MCF 10A (cell line): ENCODE measurements at regions of chr11 and their contacts with region 1.

Region 1: GRCh38 chr11:3854977-3855807 is at the start of gene STIM1:
- DNase-seq: peak; percentile 94
- H3K4me3 Mint-ChIP-seq: peak within 1 kb of the TSS; percentile 99
- H3K27ac Mint-ChIP-seq: peak within 1 kb of the TSS; percentile 87
- H3K4me1 Mint-ChIP-seq: peaks cover 30% of the 10 kb centered on the region
- H3K27me3 Mint-ChIP-seq: no peaks in the 10 kb centered on the region
- CTCF ChIP-seq: peak; percentile 95
- total RNA-seq, gene STIM1: 41.2 and 56.2 TPM in 2 replicates

Region 2: GRCh38 chr11:3834664-3835461 is 20.3 kb before region 1 on chr11:
- CTCF ChIA-PET with region 1: interaction called, 49 read pairs
- POLR2A ChIA-PET with region 1: interaction called, 4 read pairs
- intact Hi-C with region 1: no loop called
- DNase-seq: no peak
- H3K4me3 Mint-ChIP-seq: no peak overlapping the region
- H3K27ac Mint-ChIP-seq: peak overlapping the region; percentile 82
- H3K4me1 Mint-ChIP-seq: peaks cover 45% of the 10 kb centered on the region
- H3K27me3 Mint-ChIP-seq: no peaks in the 10 kb centered on the region
- CTCF ChIP-seq: no peak

Region 3: DNA sequence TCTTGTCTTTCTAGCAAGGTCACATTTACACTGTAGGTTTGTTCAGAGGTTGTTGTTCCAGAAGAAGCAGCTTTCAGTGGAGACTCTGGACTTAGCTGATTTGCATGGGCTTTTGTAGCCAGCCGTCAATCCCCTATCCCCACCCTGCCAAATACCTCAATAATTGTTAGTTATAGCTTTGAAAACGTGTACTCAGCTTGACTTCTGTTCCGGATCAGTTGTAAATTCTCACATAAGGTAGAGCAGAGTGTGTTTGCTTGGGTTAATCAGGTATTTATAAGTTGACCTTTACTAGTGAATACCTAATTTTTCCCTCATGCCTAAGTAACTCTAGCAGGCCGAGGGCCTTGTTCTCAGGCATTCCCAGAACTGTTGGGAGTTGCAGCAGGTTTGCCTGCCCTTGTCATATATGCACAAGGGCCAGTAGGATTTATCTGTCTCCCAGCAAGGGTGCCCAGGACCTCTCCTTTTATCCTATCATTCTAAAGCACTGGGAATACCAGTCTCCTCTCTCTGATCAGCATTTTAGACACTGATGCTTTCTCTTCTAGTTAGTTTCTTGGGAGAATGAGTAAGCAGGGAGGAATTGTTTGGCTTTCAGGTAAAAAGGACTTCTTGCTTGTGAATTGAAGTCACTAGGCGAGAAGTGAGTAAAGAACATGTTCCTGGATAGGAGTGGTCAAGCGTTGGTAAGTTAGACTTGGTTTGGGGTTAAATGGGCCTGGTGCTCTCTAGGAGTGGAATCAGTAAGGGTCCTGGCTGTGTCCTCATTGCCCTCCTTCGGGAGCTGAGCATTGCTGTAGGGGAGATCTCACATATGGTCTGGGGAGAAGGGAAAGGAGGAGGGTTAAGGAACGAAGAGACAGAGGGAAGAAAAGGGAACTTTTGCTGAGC is 22.4 kb after region 1 on chr11:
- CTCF ChIA-PET with region 1: interaction called, 45 read pairs
- POLR2A ChIA-PET with region 1: interaction called, 4 read pairs
- intact Hi-C with region 1: no loop called
- DNase-seq: no peak
- H3K4me3 Mint-ChIP-seq: no peak overlapping the region
- H3K27ac Mint-ChIP-seq: no peak overlapping the region
- H3K4me1 Mint-ChIP-seq: peaks cover 26% of the 10 kb centered on the region
- H3K27me3 Mint-ChIP-seq: no peaks in the 10 kb centered on the region
- CTCF ChIP-seq: no peak

Region 4: GRCh38 chr11:3927133-3927796 is 72.1 kb after region 1 on chr11:
- CTCF ChIA-PET with region 1: interaction called, 19 read pairs
- POLR2A ChIA-PET with region 1: interaction called, 7 read pairs
- intact Hi-C with region 1: no loop called
- DNase-seq: no peak
- H3K4me3 Mint-ChIP-seq: no peak overlapping the region
- H3K27ac Mint-ChIP-seq: no peak overlapping the region
- H3K4me1 Mint-ChIP-seq: no peaks in the 10 kb centered on the region
- H3K27me3 Mint-ChIP-seq: no peaks in the 10 kb centered on the region
- CTCF ChIP-seq: no peak

Region 5: DNA sequence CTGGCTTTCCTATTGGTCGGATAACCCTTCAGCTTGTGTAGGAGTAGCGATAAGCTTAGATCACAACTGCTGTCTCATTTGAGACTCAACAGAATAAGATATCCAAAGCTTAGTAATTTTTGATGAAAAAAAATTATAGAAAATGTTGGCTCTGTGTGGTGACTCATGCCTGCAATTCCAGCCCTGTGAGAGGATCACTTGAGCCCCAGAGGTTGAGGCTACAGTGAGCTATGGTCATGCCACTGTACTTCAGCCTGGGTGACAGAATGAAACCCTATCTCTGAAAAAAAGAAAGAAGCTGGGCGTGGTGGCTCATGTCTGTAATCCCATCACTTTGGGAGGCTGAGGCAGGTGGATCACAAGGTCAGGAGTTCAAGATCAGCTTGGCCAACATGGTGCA is 183.8 kb after region 1 on chr11:
- CTCF ChIA-PET with region 1: interaction called, 60 read pairs
- POLR2A ChIA-PET with region 1: interaction called, 17 read pairs
- intact Hi-C with region 1: no loop called
- DNase-seq: no peak
- H3K4me3 Mint-ChIP-seq: no peak overlapping the region
- H3K27ac Mint-ChIP-seq: no peak overlapping the region
- H3K4me1 Mint-ChIP-seq: peaks cover 4% of the 10 kb centered on the region
- H3K27me3 Mint-ChIP-seq: no peaks in the 10 kb centered on the region
- CTCF ChIP-seq: no peak

Region 6: DNA sequence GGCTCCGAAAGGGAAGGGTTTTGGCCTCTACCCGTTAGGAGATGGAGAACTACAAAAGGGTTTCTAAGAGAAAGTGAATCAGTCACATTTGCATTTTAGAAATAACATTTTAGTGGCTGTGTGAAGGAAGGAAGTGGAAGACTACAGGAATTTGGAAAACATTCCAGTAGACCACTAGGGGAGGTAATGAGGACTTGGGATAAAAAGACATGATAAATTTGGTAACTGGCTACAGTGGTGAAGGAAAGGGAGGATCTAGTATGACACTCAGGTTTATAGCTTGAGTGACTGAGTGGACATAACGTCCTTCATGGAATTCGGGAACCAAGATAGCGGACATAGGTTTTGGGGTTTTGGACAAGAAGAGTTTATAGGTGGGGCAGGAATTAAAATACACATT is 232.4 kb after region 1 on chr11:
- CTCF ChIA-PET with region 1: interaction called, 31 read pairs
- POLR2A ChIA-PET with region 1: interaction called, 5 read pairs
- intact Hi-C with region 1: no loop called
- DNase-seq: no peak
- H3K4me3 Mint-ChIP-seq: no peak overlapping the region
- H3K27ac Mint-ChIP-seq: no peak overlapping the region
- H3K4me1 Mint-ChIP-seq: no peaks in the 10 kb centered on the region
- H3K27me3 Mint-ChIP-seq: no peaks in the 10 kb centered on the region
- CTCF ChIP-seq: peak; percentile 7